ENCODE measurements at regions of chr11 and their contacts with region 1.

Region 1: DNA sequence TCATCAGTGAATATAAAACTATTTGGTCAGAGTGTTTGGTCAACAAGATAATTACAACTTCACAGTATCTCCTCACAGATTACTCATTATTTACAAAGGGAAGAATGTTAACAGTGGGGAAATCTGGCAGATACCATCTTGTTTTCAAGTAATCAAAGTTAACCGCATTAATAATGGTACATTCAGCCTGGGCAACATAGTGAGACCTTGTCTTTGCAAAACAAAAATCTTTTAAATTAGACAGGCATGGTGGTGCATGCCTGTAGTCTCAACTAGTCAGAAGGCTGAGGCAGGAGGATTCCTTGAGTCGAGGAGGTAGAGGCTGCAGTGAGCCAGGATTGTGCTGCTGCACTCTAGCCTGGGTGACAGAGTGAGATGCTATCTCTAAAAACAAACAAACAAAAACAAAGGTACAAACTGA is 78.5 kb downstream of the ACER3 start:
- DNase-seq: peak in 1 of 2 experiments; percentile 90
- H3K4me3 ChIP-seq: no peak overlapping the region
- H3K27ac ChIP-seq: no peak overlapping the region
- H3K4me1 ChIP-seq: peaks cover 32% of the 10 kb centered on the region
- H3K27me3 ChIP-seq: no peaks in the 10 kb centered on the region
- CTCF ChIP-seq: no peak

Region 2: GRCh38 chr11:77039491-77040400 is 100.5 kb after region 1 on chr11:
- CTCF ChIA-PET with region 1: no interaction called
- POLR2A ChIA-PET with region 1: no interaction called
- intact Hi-C with region 1: loop called (anchors 5 kb)
- DNase-seq: no peak
- H3K4me3 ChIP-seq: no peak overlapping the region
- H3K27ac ChIP-seq: no peak overlapping the region
- H3K4me1 ChIP-seq: peaks cover 31% of the 10 kb centered on the region
- H3K27me3 ChIP-seq: no peaks in the 10 kb centered on the region
- CTCF ChIP-seq: no peak; the same call in 1 of the 2 replicates

Region 3: GRCh38 chr11:77418155-77418970 is 479.1 kb after region 1 on chr11:
- CTCF ChIA-PET with region 1: no interaction called
- POLR2A ChIA-PET with region 1: no interaction called
- intact Hi-C with region 1: no loop called
- DNase-seq: peak in 1 of 2 experiments; percentile 32
- H3K4me3 ChIP-seq: no peak overlapping the region
- H3K27ac ChIP-seq: no peak overlapping the region
- H3K4me1 ChIP-seq: no peaks in the 10 kb centered on the region; the same call in 1 of the 2 replicates
- H3K27me3 ChIP-seq: no peaks in the 10 kb centered on the region
- CTCF ChIP-seq: no peak

Measured in PC-9 (cell line).